Activated CD8-positive, alpha-beta memory T cell treated with anti-CD3 and anti-CD28 coated beads, Interleukin-2, amount 10 ng/mL, durations not matched to agents 7 days and 5 days (primary cell): ENCODE measurements at regions of chr14 and their contacts with region 1.

Region 1: DNA sequence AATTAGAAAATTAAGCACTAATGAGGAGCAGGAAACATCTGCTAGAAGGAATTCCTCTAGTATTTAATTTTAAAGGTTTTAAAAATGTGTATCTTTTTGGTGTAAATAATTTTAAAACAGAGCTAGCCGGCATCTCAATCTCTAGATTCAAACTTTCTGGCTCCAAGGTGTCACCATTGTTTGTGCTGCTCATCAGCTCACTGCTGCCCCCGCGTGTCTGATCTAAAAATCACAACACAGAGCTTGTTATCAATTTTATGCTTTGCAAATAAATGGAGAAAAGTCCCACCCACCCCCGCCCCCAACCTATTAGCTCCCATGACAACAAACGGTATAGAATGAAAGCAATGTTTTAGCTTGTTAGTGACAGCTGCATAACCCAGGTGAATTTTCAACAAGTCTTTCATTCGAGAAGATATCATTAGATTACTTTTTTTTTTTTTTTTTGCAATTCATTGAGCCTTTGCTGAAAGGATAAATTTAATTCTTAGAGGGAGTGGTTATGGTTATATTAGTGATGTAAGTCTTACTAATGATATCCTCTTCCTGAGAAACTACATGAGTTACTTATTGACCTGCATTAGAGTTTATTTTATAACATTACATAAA is 11.3 kb upstream of the ABHD12B start:
- DNase-seq: peak; percentile 93
- ATAC-seq: peak; percentile 74
- H3K4me3 Mint-ChIP-seq: peak overlapping the region; percentile 84
- H3K27ac Mint-ChIP-seq: peak overlapping the region; percentile 86
- H3K4me1 Mint-ChIP-seq: peaks cover 11% of the 10 kb centered on the region
- H3K27me3 Mint-ChIP-seq: peaks cover 3% of the 10 kb centered on the region

Region 2: GRCh38 chr14:50619556-50620141 is 240.9 kb before region 1 on chr14:
- CTCF ChIA-PET with region 1: interaction called, 13 read pairs
- DNase-seq: no peak
- ATAC-seq: peak; percentile 55
- H3K4me3 Mint-ChIP-seq: no peak overlapping the region
- H3K27ac Mint-ChIP-seq: no peak overlapping the region
- H3K4me1 Mint-ChIP-seq: peaks cover 2% of the 10 kb centered on the region
- H3K27me3 Mint-ChIP-seq: peaks cover 2% of the 10 kb centered on the region

Region 3: DNA sequence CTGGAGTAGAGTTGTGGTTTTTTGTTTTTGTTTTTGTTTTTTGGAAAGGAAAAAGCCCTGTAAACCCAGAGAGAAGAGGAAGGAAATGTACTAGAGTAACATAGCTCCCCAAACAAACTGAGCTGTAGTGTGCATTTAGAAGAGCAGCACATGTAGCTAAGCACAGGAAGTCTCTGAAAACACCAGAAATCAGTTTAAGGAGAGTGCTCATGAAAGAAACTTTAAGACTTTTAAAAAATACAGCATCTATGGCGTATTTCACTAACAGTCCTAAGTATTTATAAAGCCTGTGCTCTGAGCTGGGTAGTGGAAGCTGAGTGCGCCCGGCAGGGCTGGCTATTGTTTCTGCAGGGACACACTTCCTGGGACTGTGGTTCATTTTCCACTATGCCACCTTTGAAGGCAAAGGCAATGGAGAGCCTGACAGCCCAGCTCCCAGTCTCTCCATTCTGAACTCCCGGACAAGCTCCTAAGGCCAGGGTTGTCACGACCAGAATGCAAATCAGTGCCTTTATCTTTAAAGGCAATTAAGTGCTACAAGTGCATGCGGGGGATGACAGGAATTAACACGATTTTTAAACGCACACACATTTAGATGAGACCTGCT is 75.0 kb before region 1 on chr14:
- CTCF ChIA-PET with region 1: interaction called, 90 read pairs
- DNase-seq: no peak
- ATAC-seq: peak; percentile 62
- H3K4me3 Mint-ChIP-seq: peak overlapping the region; percentile 29
- H3K27ac Mint-ChIP-seq: peak overlapping the region; percentile 61
- H3K4me1 Mint-ChIP-seq: peaks cover 67% of the 10 kb centered on the region
- H3K27me3 Mint-ChIP-seq: no peaks in the 10 kb centered on the region

Region 4: GRCh38 chr14:50823051-50823761 is 37.4 kb before region 1 on chr14:
- CTCF ChIA-PET with region 1: interaction called, 36 read pairs
- DNase-seq: no peak
- ATAC-seq: peak; percentile 12
- H3K4me3 Mint-ChIP-seq: peak overlapping the region; percentile 68
- H3K27ac Mint-ChIP-seq: peak overlapping the region; percentile 88
- H3K4me1 Mint-ChIP-seq: peaks cover 75% of the 10 kb centered on the region
- H3K27me3 Mint-ChIP-seq: no peaks in the 10 kb centered on the region

Region 5: DNA sequence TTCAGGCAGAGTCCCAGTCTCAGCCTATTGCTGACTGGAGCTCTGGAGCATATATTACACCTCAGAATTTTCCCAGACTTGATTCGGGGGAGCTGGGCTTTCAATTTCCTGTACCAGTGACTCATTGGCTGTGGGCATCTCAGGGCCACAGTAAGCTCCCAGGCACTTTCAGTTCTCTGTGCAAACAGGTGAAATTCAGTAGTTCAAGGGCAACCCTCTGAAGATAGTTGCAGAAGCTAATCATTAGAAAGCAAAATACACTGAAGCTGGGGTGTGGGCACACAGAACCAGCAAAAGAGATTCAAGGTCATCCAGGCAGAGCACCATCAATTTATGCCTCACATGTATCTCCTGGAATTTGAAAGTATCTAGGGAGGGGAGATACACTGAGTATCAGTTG is 21.5 kb before region 1 on chr14:
- CTCF ChIA-PET with region 1: interaction called, 15 read pairs
- DNase-seq: peak; percentile 46
- ATAC-seq: peak; percentile 47
- H3K4me3 Mint-ChIP-seq: no peak overlapping the region
- H3K27ac Mint-ChIP-seq: no peak overlapping the region
- H3K4me1 Mint-ChIP-seq: peaks cover 28% of the 10 kb centered on the region
- H3K27me3 Mint-ChIP-seq: no peaks in the 10 kb centered on the region